Colonic mucosa (tissue), 4 donors: ENCODE measurements at regions of chr5 and their contacts with region 1.

Region 1: DNA sequence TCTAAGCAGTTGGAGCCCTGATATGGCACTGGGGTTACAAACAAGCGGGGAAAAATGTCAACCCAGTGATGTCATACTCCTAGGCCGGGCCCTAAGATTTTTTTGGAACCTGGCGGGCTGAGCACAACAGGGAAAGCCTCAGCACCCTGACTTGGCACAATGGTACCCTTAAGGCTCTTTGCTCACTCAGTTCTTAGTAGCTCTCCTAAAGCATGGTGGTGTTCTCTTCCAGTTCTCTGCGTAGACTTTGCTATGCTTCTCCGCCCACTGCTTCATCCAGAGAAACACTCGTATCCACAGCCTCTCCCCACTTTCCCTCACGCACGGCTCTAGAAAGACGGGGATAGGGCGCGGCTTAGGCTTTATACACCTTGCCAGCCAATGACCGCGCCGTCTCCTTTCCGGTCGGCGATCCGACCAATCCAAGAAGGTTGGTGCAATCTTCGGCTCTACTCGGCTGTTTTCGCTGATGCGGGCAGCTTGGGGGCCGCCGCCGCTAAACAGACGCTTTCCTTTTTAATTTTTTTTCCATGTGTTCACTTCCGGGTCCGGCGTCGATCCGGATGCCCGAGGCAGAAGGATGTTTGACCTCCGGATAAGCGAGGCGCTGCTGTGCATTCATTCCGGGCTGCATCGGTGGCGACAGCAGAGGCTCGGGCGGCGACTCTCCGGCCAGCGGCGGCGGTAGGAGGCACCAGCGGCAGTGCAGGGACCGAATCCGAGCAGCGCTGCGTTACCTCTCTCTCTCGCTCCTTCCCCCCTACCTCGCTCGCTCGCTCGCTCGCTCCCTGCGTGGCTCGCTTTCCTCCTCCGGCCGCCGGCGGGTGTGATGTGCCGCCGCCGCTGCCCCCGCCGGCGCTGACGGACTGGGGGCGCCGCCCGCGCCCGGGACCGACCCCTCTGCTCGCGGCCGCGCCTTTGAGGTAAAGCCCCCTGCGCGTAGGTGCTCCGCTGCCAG is at the start of gene CSNK1G3:
- DNase-seq: peak; percentile 98
- H3K4me3 ChIP-seq: peak within 1 kb of the TSS; percentile 61
- H3K27ac ChIP-seq: peak within 1 kb of the TSS; percentile 94
- H3K4me1 ChIP-seq: no peaks in the 10 kb centered on the region
- H3K27me3 ChIP-seq: no peaks in the 10 kb centered on the region
- CTCF ChIP-seq: no peak
- total RNA-seq, gene CSNK1G3: 55.5 to 78.3 TPM

Region 2: DNA sequence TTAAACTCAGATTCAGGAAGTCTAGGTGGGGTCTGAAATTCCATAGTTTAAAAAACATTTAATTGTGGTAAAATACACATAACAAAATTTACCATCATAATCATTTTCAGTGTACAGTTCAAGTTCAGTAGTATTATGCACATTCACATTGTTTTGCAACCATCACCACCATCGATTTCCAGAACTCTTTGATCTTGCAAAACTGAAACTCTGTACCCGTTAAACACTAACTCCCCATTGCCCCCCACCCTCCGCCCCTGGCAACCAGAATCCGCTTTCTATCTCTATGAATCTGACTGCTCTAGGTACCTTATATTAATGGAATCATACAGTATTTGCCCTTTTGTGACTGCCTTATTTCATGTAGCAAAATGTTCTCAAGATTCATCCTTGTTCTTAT is 206.2 kb before region 1 on chr5:
- intact Hi-C with region 1: no loop called
- DNase-seq: no peak
- H3K4me3 ChIP-seq: no peak overlapping the region
- H3K27ac ChIP-seq: no peak overlapping the region
- H3K4me1 ChIP-seq: no peaks in the 10 kb centered on the region
- H3K27me3 ChIP-seq: no peaks in the 10 kb centered on the region
- CTCF ChIP-seq: no peak

Region 3: DNA sequence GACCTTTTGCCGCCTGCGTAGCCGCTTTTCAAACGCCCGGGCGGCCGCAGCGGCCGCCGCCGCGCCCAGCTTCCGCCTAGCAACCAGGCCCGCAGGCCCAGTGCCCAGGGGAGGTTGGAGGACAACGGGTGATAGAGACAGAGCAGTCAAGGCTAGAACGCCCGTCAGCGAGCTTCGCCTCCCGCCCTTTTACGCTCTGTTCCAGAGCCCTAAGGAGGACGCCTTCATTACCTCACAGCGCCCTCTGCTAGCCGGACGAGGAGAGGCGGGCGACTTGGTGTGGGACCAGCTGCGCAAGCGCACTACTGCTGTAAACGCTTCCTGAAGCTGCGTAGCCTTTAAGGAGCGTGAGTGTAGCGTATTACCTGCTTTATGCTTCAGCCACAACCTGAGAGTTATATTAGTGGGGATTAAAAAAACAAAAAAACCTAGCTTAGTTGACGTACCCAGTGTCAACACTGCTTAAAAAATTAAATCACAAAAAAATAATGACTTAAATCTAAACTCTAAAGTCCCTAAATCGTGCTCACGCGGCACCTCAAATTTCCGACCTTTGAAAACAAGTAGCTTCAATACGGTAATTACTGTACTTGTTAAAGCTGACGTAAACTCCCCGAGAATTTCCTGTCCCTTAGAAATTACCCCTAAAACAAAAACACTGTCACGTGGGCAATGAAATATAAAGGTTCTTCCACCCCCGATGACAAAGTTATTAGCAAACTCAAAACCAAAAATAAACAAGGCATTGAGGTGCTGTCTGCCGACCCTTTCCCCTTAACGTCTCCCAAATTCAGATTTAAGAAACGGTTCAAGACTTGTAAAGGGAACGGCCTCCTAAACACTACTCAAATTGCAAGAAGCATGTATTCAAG is 88.4 kb before region 1 on chr5 and contains the start of gene CEP120:
- intact Hi-C with region 1: loop called (anchors 5 kb)
- DNase-seq: peak; percentile 99
- H3K4me3 ChIP-seq: peak within 1 kb of the TSS; percentile 73
- H3K27ac ChIP-seq: peak within 1 kb of the TSS; percentile 90
- H3K4me1 ChIP-seq: no peaks in the 10 kb centered on the region
- H3K27me3 ChIP-seq: no peaks in the 10 kb centered on the region
- CTCF ChIP-seq: peak; percentile 70
- total RNA-seq, gene CEP120: 11.7 to 18.2 TPM